Activated CD8-positive, alpha-beta T cell treated with anti-CD3 and anti-CD28 coated beads, Interleukin-2, amount 10 ng/mL, durations not matched to agents 7 days and 5 days (primary cell): ENCODE measurements at regions of chr2 and their contacts with region 1.

Region 1: DNA sequence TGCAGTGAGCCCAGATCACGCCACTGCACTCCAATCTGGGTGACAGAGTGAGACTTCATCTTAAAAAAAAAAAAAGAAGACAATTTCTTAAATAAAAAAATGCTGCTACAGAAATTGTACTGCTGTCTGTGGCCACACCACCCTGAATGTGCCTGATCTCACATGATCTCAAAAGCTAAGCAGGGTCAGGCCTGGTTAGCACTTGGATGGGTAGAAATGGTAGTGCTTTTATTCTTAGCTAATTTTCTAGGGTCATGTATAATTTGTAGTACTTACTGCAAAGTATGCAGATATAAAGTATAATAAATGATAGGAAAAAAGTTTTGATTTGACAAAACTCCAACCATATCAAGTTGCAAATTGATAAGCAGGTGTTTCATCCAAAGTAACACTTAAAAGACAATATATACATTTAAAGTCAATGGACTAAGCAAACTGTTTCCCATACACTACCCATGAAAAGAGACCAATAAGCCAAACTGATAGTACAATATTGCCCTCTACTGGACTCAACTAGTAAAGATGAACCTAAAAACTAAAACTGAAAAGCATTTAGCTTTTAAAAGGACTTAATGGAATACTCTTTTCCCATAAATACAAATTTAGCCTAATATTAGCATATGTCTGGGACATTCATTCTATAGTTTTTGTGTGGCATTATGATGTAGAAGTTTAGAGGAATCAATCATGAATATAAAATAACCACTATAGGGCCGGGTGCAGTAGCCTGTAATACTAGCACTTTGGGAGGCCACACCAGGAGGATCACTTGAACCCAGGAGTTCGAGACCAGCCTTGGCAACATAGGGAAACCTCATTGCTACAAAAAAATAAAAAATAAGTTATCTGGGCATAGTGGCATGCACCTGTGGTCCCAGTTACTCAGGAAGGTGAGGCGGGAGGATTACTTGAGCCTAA is 18.6 kb upstream of the PEX13 start:
- DNase-seq: no peak
- ATAC-seq: peak; percentile 79
- H3K4me3 Mint-ChIP-seq: no peak overlapping the region
- H3K27ac Mint-ChIP-seq: no peak overlapping the region
- H3K4me1 Mint-ChIP-seq: no peaks in the 10 kb centered on the region
- H3K27me3 Mint-ChIP-seq: no peaks in the 10 kb centered on the region

Region 2: GRCh38 chr2:60707750-60708371 is 291.0 kb before region 1 on chr2:
- CTCF ChIA-PET with region 1: interaction called, 74 read pairs
- POLR2A ChIA-PET with region 1: no interaction called
- DNase-seq: peak; percentile 23
- ATAC-seq: no peak
- H3K4me3 Mint-ChIP-seq: no peak overlapping the region
- H3K27ac Mint-ChIP-seq: no peak overlapping the region
- H3K4me1 Mint-ChIP-seq: peaks cover 3% of the 10 kb centered on the region
- H3K27me3 Mint-ChIP-seq: peaks cover 9% of the 10 kb centered on the region

Region 3: GRCh38 chr2:60794277-60794863 is 204.5 kb before region 1 on chr2:
- CTCF ChIA-PET with region 1: interaction called, 33 read pairs
- POLR2A ChIA-PET with region 1: no interaction called
- DNase-seq: no peak
- ATAC-seq: no peak
- H3K4me3 Mint-ChIP-seq: no peak overlapping the region
- H3K27ac Mint-ChIP-seq: no peak overlapping the region
- H3K4me1 Mint-ChIP-seq: peaks cover 17% of the 10 kb centered on the region
- H3K27me3 Mint-ChIP-seq: no peaks in the 10 kb centered on the region

Region 4: DNA sequence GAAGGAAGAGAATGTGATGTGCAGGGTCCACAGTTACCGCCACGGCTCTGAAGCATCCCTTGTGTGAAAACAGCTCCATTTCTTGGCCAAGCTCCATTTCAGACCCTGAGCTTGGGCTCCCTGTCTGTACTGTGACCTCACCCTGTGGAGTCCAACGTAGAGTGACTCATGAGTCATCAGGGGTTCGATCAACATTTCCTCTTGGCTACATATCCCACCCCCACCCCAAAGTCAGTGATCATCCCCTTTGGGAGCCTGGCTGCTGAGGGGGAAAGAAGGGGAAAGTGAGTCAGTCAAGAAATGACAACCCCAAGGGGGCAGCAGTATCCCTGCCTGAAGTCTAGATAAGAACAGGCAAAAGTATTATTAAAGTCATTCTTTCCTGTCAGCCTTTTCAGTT is 180.6 kb before region 1 on chr2:
- CTCF ChIA-PET with region 1: interaction called, 43 read pairs
- POLR2A ChIA-PET with region 1: no interaction called
- DNase-seq: peak; percentile 44
- ATAC-seq: no peak
- H3K4me3 Mint-ChIP-seq: no peak overlapping the region
- H3K27ac Mint-ChIP-seq: peak overlapping the region; percentile 72
- H3K4me1 Mint-ChIP-seq: peaks cover 45% of the 10 kb centered on the region
- H3K27me3 Mint-ChIP-seq: peaks cover 7% of the 10 kb centered on the region

Region 5: GRCh38 chr2:60964651-60965498 is 34.0 kb before region 1 on chr2:
- CTCF ChIA-PET with region 1: interaction called, 13 read pairs
- POLR2A ChIA-PET with region 1: no interaction called
- DNase-seq: peak; percentile 55
- ATAC-seq: peak; percentile 84
- H3K4me3 Mint-ChIP-seq: no peak overlapping the region
- H3K27ac Mint-ChIP-seq: peak overlapping the region; percentile 95
- H3K4me1 Mint-ChIP-seq: peaks cover 37% of the 10 kb centered on the region
- H3K27me3 Mint-ChIP-seq: no peaks in the 10 kb centered on the region

Region 6: DNA sequence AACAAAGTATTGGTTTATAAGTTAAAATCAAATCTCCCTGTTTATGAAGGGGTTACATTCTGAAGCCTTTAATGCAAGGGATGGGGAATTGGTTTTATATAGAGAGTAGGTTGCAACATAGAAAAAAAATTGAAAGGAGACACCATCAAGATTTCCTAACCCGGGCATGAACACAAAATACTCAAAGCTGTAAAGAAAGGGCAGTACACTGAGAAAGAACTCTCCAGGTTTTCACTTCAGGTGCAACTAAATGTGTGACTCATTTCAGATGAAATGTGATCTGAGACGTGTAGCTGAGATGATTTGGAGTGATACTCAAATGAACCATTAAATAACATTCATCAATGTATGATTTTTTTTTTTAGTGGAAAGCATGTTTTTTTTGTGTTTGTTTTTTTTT is 110.4 kb after region 1 on chr2:
- CTCF ChIA-PET with region 1: no interaction called
- POLR2A ChIA-PET with region 1: no interaction called
- DNase-seq: no peak
- ATAC-seq: no peak
- H3K4me3 Mint-ChIP-seq: no peak overlapping the region
- H3K27ac Mint-ChIP-seq: no peak overlapping the region
- H3K4me1 Mint-ChIP-seq: no peaks in the 10 kb centered on the region
- H3K27me3 Mint-ChIP-seq: no peaks in the 10 kb centered on the region

Region 7: GRCh38 chr2:61233581-61233980 is 234.7 kb after region 1 on chr2:
- CTCF ChIA-PET with region 1: no interaction called
- POLR2A ChIA-PET with region 1: no interaction called
- DNase-seq: no peak
- ATAC-seq: no peak
- H3K4me3 Mint-ChIP-seq: no peak overlapping the region
- H3K27ac Mint-ChIP-seq: no peak overlapping the region
- H3K4me1 Mint-ChIP-seq: peaks cover 8% of the 10 kb centered on the region
- H3K27me3 Mint-ChIP-seq: no peaks in the 10 kb centered on the region